ENCODE measurements at regions of chr6 and their contacts with region 1.

Region 1: DNA sequence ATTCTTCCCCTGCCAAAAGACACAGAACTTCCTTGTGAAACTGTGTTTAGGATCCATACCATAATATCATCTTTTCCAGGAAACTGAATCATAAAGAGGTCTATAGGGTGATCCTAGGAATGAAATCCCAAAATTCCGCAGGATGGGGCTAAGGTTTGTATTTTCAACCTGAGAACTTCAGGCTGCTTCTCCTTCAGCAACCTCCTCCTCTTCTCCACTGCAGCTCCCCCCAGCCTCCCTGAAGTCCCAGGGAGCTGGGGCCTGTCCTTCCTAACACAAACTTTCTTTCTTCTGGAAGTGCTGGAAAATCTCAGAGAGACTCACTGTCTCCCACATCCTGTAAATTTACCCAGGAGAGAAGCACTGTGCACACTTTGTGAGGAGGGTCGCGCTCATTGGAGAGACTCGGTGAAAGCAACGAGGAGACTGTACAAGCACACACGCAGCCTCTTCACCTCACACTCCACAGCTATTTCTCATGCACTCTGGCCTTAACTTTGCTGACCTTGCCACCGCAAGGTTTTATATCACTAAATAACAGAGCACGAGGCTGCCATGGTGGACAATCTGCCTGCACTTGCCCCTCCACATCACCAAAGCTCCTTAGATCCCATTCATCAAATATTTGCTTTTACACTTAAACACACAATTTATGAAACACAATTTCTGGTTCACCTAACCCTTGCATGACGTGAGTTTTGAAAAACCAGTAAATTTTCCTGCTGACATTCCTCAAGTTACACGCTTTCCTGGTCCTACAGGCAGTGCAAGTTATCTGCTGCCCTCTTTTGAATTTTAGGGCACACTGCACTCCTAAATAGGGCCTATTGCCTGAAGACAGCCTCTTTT is 14.3 kb downstream of the ID4 start:
- DNase-seq: no peak
- H3K4me3 ChIP-seq: peak overlapping the region in 2 of 4 donors; percentile 13 to 25
- H3K27ac ChIP-seq: peak overlapping the region; percentile 66 to 82 (median 74)
- H3K4me1 ChIP-seq: peaks cover 6 to 36% (median 34%) of the 10 kb centered on the region in 4 donors
- H3K27me3 ChIP-seq: no peaks in the 10 kb centered on the region
- CTCF ChIP-seq: peak; percentile 89 to 93 (median 92)
- EP300 ChIP-seq: no peak
- POLR2A ChIP-seq: no peak

Region 2: GRCh38 chr6:18595774-18596530 is 1255.5 kb before region 1 on chr6:
- intact Hi-C with region 1: loop called (anchors 10 kb)
- DNase-seq: no peak
- H3K4me3 ChIP-seq: peak overlapping the region in 2 of 4 donors; percentile 9 to 15
- H3K27ac ChIP-seq: peak overlapping the region; percentile 21 to 54 (median 49)
- H3K4me1 ChIP-seq: peaks cover 0 to 21% (median 19%) of the 10 kb centered on the region in 4 donors
- H3K27me3 ChIP-seq: no peaks in the 10 kb centered on the region
- CTCF ChIP-seq: peak; percentile 85 to 93 (median 91)
- EP300 ChIP-seq: no peak
- POLR2A ChIP-seq: no peak

Region 3: DNA sequence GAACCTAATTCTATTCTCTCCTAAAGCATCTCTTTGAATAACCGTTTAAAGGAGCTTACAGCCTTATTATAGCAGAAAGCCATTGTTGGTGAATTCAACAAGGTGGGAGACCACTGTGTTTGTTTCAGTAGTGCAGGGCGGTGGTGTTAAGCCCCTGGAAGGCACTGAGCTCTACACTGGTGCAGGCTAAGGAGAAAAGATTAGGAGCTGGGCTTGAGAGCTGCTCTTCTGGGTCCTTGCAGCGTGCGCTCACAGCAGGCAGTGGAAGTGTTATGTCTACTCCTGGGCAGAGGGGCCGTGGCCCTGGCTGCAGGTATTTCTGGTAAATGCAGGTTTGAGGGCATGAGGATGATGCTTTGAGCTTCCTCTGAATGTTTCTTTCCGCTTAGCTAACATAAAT is 1103.2 kb before region 1 on chr6:
- intact Hi-C with region 1: loop called (anchors 5 kb)
- DNase-seq: no peak
- H3K4me3 ChIP-seq: no peak overlapping the region
- H3K27ac ChIP-seq: no peak overlapping the region
- H3K4me1 ChIP-seq: peaks cover 4 to 11% (median 9%) of the 10 kb centered on the region in 4 donors
- H3K27me3 ChIP-seq: no peaks in the 10 kb centered on the region
- CTCF ChIP-seq: no peak
- EP300 ChIP-seq: no peak
- POLR2A ChIP-seq: no peak

Region 4: GRCh38 chr6:18990059-18990978 is 861.1 kb before region 1 on chr6:
- intact Hi-C with region 1: loop called (anchors 10 kb)
- DNase-seq: no peak
- H3K4me3 ChIP-seq: peak overlapping the region in 3 of 4 donors; percentile 10 to 24 (median 19)
- H3K27ac ChIP-seq: no peak overlapping the region
- H3K4me1 ChIP-seq: peaks cover 0 to 31% (median 14%) of the 10 kb centered on the region in 4 donors
- H3K27me3 ChIP-seq: no peaks in the 10 kb centered on the region
- CTCF ChIP-seq: peak; percentile 48 to 64 (median 52)
- EP300 ChIP-seq: no peak
- POLR2A ChIP-seq: no peak

Region 5: GRCh38 chr6:19812512-19813119 is 38.8 kb before region 1 on chr6:
- intact Hi-C with region 1: loop called (anchors 2 kb)
- DNase-seq: no peak
- H3K4me3 ChIP-seq: no peak overlapping the region
- H3K27ac ChIP-seq: no peak overlapping the region
- H3K4me1 ChIP-seq: peaks cover 0 to 3% (median 0%) of the 10 kb centered on the region in 4 donors
- H3K27me3 ChIP-seq: no peaks in the 10 kb centered on the region
- CTCF ChIP-seq: peak; percentile 53 to 77 (median 56)
- EP300 ChIP-seq: no peak
- POLR2A ChIP-seq: no peak

Region 6: GRCh38 chr6:20085817-20086216 is 234.4 kb after region 1 on chr6:
- intact Hi-C with region 1: no loop called
- DNase-seq: no peak
- H3K4me3 ChIP-seq: no peak overlapping the region
- H3K27ac ChIP-seq: no peak overlapping the region
- H3K4me1 ChIP-seq: no peaks in the 10 kb centered on the region
- H3K27me3 ChIP-seq: no peaks in the 10 kb centered on the region
- CTCF ChIP-seq: no peak
- EP300 ChIP-seq: no peak
- POLR2A ChIP-seq: no peak